ENCODE measurements at regions of chr7 and their contacts with region 1.

Region 1: GRCh38 chr7:63012633-63013183 is 985.9 kb upstream of the ZNF722 start:
- DNase-seq: no peak
- H3K4me3 ChIP-seq: no peak overlapping the region
- H3K4me3 Mint-ChIP-seq: no peak overlapping the region
- H3K27ac ChIP-seq: no peak overlapping the region
- H3K27ac Mint-ChIP-seq: peak overlapping the region in 1 of 7 donors; percentile 4
- H3K4me1 ChIP-seq: no peaks in the 10 kb centered on the region
- H3K4me1 Mint-ChIP-seq: no peaks in the 10 kb centered on the region
- H3K27me3 ChIP-seq: no peaks in the 10 kb centered on the region
- H3K27me3 Mint-ChIP-seq: peaks cover 0 to 3% (median 2%) of the 10 kb centered on the region in 3 donors
- CTCF ChIP-seq: no peak

Region 2: GRCh38 chr7:63057265-63057664 is 44.6 kb after region 1 on chr7:
- intact Hi-C with region 1: no loop called
- DNase-seq: no peak
- H3K4me3 ChIP-seq: no peak overlapping the region
- H3K4me3 Mint-ChIP-seq: no peak overlapping the region
- H3K27ac ChIP-seq: no peak overlapping the region
- H3K27ac Mint-ChIP-seq: no peak overlapping the region
- H3K4me1 ChIP-seq: no peaks in the 10 kb centered on the region
- H3K4me1 Mint-ChIP-seq: no peaks in the 10 kb centered on the region
- H3K27me3 ChIP-seq: no peaks in the 10 kb centered on the region
- H3K27me3 Mint-ChIP-seq: peaks cover 0 to 2% (median 1%) of the 10 kb centered on the region in 3 donors
- CTCF ChIP-seq: no peak

Region 3: GRCh38 chr7:63067897-63068602 is 55.3 kb after region 1 on chr7:
- intact Hi-C with region 1: no loop called
- DNase-seq: no peak
- H3K4me3 ChIP-seq: no peak overlapping the region
- H3K4me3 Mint-ChIP-seq: no peak overlapping the region
- H3K27ac ChIP-seq: no peak overlapping the region
- H3K27ac Mint-ChIP-seq: no peak overlapping the region
- H3K4me1 ChIP-seq: no peaks in the 10 kb centered on the region
- H3K4me1 Mint-ChIP-seq: no peaks in the 10 kb centered on the region
- H3K27me3 ChIP-seq: no peaks in the 10 kb centered on the region
- H3K27me3 Mint-ChIP-seq: peaks cover 0 to 2% (median 0%) of the 10 kb centered on the region in 3 donors
- CTCF ChIP-seq: no peak

Region 4: DNA sequence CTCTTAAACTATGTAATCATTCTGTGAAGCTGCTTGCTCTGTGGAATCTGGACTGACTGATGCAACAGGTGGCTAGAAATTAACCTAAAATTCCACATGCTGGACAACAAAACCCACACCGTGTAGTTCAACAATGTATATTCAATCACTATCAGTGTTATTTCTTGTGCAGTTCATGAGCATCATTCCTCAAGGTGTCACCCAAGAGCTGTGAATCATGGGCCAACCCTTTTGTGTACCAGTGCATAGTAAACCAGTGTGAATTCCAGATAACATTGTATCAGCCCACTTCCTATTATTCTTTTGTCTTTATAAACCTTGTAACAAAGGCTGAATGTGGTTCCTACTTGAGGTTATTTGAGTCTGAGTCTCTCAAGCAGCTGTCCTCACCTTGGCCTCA is 80.8 kb after region 1 on chr7:
- intact Hi-C with region 1: no loop called
- DNase-seq: no peak
- H3K4me3 ChIP-seq: no peak overlapping the region
- H3K4me3 Mint-ChIP-seq: no peak overlapping the region
- H3K27ac ChIP-seq: no peak overlapping the region
- H3K27ac Mint-ChIP-seq: no peak overlapping the region
- H3K4me1 ChIP-seq: no peaks in the 10 kb centered on the region
- H3K4me1 Mint-ChIP-seq: no peaks in the 10 kb centered on the region
- H3K27me3 ChIP-seq: no peaks in the 10 kb centered on the region
- H3K27me3 Mint-ChIP-seq: peaks cover 0 to 1% (median 0%) of the 10 kb centered on the region in 3 donors
- CTCF ChIP-seq: no peak

Region 5: GRCh38 chr7:63205136-63205535 is 192.4 kb after region 1 on chr7:
- intact Hi-C with region 1: no loop called
- DNase-seq: no peak
- H3K4me3 ChIP-seq: no peak overlapping the region
- H3K4me3 Mint-ChIP-seq: no peak overlapping the region
- H3K27ac ChIP-seq: no peak overlapping the region
- H3K27ac Mint-ChIP-seq: no peak overlapping the region
- H3K4me1 ChIP-seq: no peaks in the 10 kb centered on the region
- H3K4me1 Mint-ChIP-seq: no peaks in the 10 kb centered on the region
- H3K27me3 ChIP-seq: no peaks in the 10 kb centered on the region
- H3K27me3 Mint-ChIP-seq: no peaks in the 10 kb centered on the region
- CTCF ChIP-seq: no peak

Region 6: GRCh38 chr7:64625114-64626082 is 1612.7 kb after region 1 on chr7:
- intact Hi-C with region 1: loop called in 1 of 2 experiments (anchors 10 kb)
- DNase-seq: peak in 2 of 3 donors; percentile 6 to 23
- H3K4me3 ChIP-seq: no peak overlapping the region
- H3K4me3 Mint-ChIP-seq: no peak overlapping the region
- H3K27ac ChIP-seq: no peak overlapping the region
- H3K27ac Mint-ChIP-seq: no peak overlapping the region
- H3K4me1 ChIP-seq: no peaks in the 10 kb centered on the region
- H3K4me1 Mint-ChIP-seq: no peaks in the 10 kb centered on the region
- H3K27me3 ChIP-seq: no peaks in the 10 kb centered on the region
- H3K27me3 Mint-ChIP-seq: no peaks in the 10 kb centered on the region
- CTCF ChIP-seq: peak; percentile 88